ENCODE measurements at regions of chr11 and their contacts with region 1.

Region 1: GRCh38 chr11:57493507-57494503 is 21.7 kb downstream of the SLC43A1 start:
- DNase-seq: peak; percentile 17
- ATAC-seq: peak; percentile 61
- H3K4me3 ChIP-seq: no peak overlapping the region
- H3K27ac ChIP-seq: no peak overlapping the region
- H3K4me1 ChIP-seq: no peaks in the 10 kb centered on the region
- H3K27me3 ChIP-seq: no peaks in the 10 kb centered on the region
- CTCF ChIP-seq: peak; percentile 58
- POLR2A ChIP-seq: no peak
- RAD21 ChIP-seq: peak; percentile 46

Region 2: GRCh38 chr11:57368106-57368844 is 125.5 kb before region 1 on chr11:
- CTCF ChIA-PET with region 1: no interaction called
- POLR2A ChIA-PET with region 1: no interaction called
- dilution Hi-C with region 1: no loop called
- in situ Hi-C with region 1: no loop called
- intact Hi-C with region 1: no loop called
- DNase-seq: no peak
- ATAC-seq: no peak
- H3K4me3 ChIP-seq: no peak overlapping the region
- H3K27ac ChIP-seq: no peak overlapping the region
- H3K4me1 ChIP-seq: no peaks in the 10 kb centered on the region
- H3K27me3 ChIP-seq: peaks cover 44% of the 10 kb centered on the region
- CTCF ChIP-seq: no peak
- POLR2A ChIP-seq: no peak
- RAD21 ChIP-seq: no peak

Region 3: DNA sequence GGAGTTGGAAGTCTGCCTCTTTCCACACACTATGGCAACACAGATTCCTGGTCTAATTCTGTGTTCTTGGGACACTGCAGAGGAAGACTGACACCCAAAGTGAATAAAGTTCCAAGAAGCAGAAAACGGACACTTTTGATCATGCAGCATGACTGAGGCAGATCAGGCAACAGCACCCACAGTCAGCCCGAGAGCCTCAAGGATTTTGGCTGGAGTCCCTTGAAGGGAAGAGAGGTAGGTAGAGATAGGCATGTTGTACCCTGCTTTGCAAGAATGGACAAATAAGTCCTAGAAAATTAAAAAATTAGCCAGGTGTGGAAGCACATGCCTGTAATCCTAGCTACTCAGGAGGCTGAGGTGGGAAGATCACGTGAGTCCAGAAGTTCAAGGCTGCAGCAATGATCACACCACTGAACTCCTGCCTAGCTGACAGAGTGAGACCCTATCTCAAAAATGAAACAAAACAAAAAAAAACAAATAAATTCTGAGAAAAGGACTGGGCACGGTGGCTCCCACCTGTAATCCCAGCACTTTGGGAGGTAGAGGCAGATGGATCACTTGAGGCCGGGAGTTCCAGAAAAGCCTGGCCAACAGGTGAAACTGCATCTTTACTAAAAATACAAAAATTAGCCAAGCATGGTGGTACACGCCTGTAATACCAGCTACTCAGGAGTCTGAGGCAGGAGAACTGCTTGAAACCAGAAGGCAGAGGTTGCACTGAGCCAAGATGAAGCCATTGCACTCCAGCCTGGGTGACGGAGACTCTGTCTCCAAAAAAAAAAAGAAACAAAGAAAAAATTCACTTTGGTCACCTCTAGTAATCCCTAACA is 14.8 kb after region 1 on chr11:
- CTCF ChIA-PET with region 1: interaction called, 12 read pairs
- POLR2A ChIA-PET with region 1: no interaction called
- dilution Hi-C with region 1: no loop called
- in situ Hi-C with region 1: no loop called
- intact Hi-C with region 1: no loop called
- DNase-seq: no peak
- ATAC-seq: no peak
- H3K4me3 ChIP-seq: no peak overlapping the region
- H3K27ac ChIP-seq: no peak overlapping the region
- H3K4me1 ChIP-seq: no peaks in the 10 kb centered on the region; the same call in 1 of the 2 replicates
- H3K27me3 ChIP-seq: no peaks in the 10 kb centered on the region
- CTCF ChIP-seq: no peak
- POLR2A ChIP-seq: no peak
- RAD21 ChIP-seq: no peak

Region 4: DNA sequence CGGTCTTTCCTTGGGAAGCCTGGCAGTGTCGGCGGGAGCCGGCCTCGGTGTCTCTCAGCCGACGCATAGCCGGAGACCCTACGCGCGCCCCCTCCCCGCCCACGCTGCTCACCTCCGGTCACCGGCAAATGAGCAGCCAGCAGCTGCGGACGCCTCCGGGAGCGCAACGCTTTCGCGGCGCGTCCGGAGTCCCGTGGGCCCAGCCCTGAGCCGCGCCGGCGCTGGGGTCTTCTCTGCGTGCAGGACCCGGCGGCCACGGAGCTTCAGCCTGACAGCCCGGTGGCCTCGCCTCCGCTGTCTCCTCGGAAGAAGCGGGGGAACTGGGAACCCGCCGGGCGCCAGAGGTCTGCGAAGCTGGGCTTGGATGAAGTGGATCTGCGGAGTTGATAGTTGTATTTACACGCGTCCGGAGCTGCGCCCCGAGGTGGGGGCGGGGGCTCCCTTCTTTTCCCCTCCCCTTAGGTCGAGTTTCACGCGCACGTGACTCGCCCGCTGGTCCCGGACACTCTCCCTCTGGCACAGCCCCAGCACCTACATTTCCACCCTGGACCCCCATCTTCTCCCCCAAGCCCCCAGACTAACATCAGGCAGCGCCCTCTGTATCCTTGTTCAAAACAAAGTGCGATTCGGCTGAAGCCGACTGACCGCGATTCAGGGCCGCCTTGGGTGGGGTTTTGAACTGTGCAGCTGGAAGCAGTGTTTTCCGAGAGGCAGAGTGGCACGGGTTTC is 21.7 kb after region 1 on chr11 and contains the start of gene SLC43A1:
- CTCF ChIA-PET with region 1: interaction called, 17 read pairs
- POLR2A ChIA-PET with region 1: no interaction called
- dilution Hi-C with region 1: no loop called
- in situ Hi-C with region 1: no loop called
- intact Hi-C with region 1: no loop called
- DNase-seq: peak; percentile 59
- ATAC-seq: peak; percentile 85
- H3K4me3 ChIP-seq: peak within 1 kb of the TSS; percentile 95
- H3K27ac ChIP-seq: peak within 1 kb of the TSS; percentile 86
- H3K4me1 ChIP-seq: no peaks in the 10 kb centered on the region; the same call in 1 of the 2 replicates
- H3K27me3 ChIP-seq: no peaks in the 10 kb centered on the region
- CTCF ChIP-seq: no peak
- POLR2A ChIP-seq: no peak
- RAD21 ChIP-seq: no peak
- total RNA-seq, gene SLC43A1: 8.6 and 10.0 TPM in 2 replicates

Region 5: GRCh38 chr11:57815476-57815875 is 321.7 kb after region 1 on chr11:
- CTCF ChIA-PET with region 1: no interaction called
- POLR2A ChIA-PET with region 1: no interaction called
- dilution Hi-C with region 1: no loop called
- in situ Hi-C with region 1: no loop called
- intact Hi-C with region 1: no loop called
- DNase-seq: no peak
- ATAC-seq: no peak
- H3K4me3 ChIP-seq: no peak overlapping the region
- H3K27ac ChIP-seq: no peak overlapping the region
- H3K4me1 ChIP-seq: peaks cover 2% of the 10 kb centered on the region; the same call in 1 of the 2 replicates
- H3K27me3 ChIP-seq: no peaks in the 10 kb centered on the region
- CTCF ChIP-seq: no peak
- POLR2A ChIP-seq: no peak
- RAD21 ChIP-seq: no peak

Measured in IMR-90 (cell line).